ENCODE measurements at regions of chr17 and their contacts with region 1.

Region 1: DNA sequence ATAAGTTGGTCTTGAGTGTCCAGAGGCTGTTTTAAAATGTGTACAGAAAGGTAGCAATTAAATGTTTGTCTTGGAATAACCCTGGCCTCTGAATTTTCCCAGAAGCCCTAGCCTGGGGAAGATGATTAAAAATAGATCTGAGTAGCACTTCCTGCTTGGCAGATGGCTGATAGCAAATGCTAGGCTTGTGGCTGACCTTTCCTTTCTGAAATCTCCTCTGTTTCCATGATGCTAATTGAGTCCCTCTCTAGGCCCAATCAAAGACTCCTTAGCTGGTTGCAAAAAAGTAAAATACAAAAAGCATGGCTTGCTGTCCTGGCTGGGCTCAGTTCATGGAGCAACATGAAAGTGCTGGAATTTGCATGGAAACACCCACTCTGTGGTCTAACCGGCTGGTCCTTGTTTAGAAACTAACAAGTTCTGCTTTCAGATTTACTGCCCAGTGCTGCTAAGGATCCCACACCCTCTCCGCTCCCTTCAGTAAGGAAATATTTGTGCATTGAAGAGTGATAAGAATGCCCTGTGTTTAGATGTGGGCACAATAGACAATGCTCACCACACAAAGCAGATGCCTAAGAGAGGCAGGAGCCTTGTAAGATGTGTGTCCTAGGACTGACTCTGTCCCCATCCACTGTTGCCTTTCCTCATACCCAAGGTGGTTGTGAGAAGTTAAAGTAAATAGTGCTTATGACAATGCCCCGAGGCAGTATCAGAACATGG is 40.8 kb downstream of the YPEL2 start:
- DNase-seq: peak in 3 of 6 donors; percentile 29 to 60 (median 45)
- ATAC-seq: peak; percentile 62 to 71 (median 68)
- H3K4me3 ChIP-seq: no peak overlapping the region
- H3K27ac ChIP-seq: peak overlapping the region; percentile 37 to 83 (median 70)
- H3K4me1 ChIP-seq: peaks cover 52 to 74% (median 66%) of the 10 kb centered on the region in 3 donors
- H3K27me3 ChIP-seq: no peaks in the 10 kb centered on the region
- CTCF ChIP-seq: no peak

Region 2: DNA sequence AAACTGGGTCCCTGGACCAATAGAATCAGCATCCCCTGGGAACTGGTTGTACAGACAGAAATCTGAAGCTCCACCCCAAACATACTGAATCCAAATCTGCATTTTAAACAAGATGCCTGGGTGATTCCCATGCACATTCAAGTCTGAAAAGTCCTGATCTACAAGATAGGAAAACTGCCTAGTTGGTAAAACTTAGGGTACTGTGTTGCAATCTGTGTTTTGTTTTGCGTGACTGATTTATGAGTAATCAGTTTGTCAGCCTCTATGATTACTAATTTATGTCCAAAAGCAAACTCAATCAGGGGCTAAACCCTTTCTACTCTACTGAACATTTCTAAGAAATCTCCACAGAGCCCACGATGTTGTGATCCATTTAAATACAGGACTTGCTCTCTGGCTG is 62.9 kb after region 1 on chr17:
- intact Hi-C with region 1: loop called in 1 of 3 experiments (anchors 10 kb)
- DNase-seq: no peak
- ATAC-seq: peak in 2 of 4 donors; percentile 25 to 39
- H3K4me3 ChIP-seq: no peak overlapping the region
- H3K27ac ChIP-seq: peak overlapping the region in 1 of 4 donors; percentile 27
- H3K4me1 ChIP-seq: peaks cover 1 to 13% (median 9%) of the 10 kb centered on the region in 3 donors
- H3K27me3 ChIP-seq: no peaks in the 10 kb centered on the region
- CTCF ChIP-seq: no peak

Measured in pancreas (tissue), 10 donors.